ENCODE measurements at regions of chr7 and their contacts with region 1.

Region 1: DNA sequence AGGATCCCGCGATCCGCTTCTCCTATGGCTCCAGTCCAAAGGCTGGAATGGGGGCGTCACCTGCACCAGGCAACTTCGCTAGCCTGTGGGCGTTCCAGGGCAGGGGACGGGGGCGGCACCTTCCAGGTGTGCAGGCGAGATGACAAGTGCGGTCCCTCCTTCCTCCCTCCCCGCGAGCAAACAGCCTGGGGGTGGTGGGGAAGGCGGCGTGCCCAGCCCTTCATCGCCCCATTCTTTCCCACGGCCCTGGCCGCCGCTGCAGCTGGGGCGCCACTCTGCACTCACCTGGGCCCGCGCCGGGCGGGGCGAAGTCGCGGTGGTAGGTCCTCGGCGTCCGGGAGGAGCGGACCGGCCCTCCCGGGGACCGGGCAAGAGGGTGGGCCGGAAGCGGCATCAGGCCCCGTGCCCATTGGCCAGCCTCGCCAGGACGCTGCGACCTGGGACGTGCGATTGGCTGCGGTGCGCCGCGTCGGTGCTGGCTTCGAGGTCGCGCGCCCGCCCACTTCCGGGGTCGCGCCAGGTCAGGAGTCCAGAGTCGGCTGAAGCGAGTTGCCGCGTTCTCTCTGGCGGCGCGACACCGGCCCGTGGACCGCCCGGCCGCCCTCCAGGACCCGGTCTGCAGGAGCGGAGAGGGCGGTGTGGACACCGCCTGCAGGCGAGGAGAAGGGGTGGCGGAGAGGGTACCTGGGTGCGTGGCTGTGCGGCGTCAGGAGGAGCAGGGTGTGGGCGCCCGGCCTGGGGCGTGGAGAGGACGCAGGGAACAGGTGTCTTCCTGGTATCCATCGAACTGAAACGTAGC is at the start of gene TECPR1:
- DNase-seq: peak; percentile 90
- H3K4me3 Mint-ChIP-seq: peak within 1 kb of the TSS; percentile 98
- H3K27ac Mint-ChIP-seq: peak within 1 kb of the TSS; percentile 96
- H3K4me1 Mint-ChIP-seq: peaks cover 45% of the 10 kb centered on the region
- H3K27me3 Mint-ChIP-seq: no peaks in the 10 kb centered on the region
- total RNA-seq, gene TECPR1: 45.4 and 45.8 TPM in 2 replicates

Region 2: GRCh38 chr7:97971990-97972943 is 279.8 kb before region 1 on chr7:
- intact Hi-C with region 1: loop called (anchors 5 kb)
- DNase-seq: peak; percentile 80
- H3K4me3 Mint-ChIP-seq: peak overlapping the region; percentile 97
- H3K27ac Mint-ChIP-seq: peak overlapping the region; percentile 92
- H3K4me1 Mint-ChIP-seq: peaks cover 10% of the 10 kb centered on the region
- H3K27me3 Mint-ChIP-seq: no peaks in the 10 kb centered on the region

Region 3: DNA sequence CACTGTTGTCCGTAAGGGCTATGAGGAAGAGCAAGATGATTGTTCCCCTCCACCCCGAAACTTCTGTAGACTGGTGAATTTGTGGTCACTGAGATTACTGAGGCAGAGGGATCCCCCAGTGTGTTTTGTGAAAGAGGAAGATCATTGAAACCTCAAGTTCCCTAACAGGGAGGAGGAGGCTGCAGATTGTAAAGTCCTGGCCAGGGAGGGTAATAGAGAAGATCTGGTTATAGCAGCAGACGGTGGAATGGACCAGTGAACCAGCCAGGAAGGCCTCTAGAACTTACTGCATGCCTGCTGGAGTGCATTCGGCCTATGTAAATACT is 114.3 kb before region 1 on chr7:
- intact Hi-C with region 1: no loop called
- DNase-seq: no peak
- H3K4me3 Mint-ChIP-seq: no peak overlapping the region
- H3K27ac Mint-ChIP-seq: no peak overlapping the region
- H3K4me1 Mint-ChIP-seq: peaks cover 13% of the 10 kb centered on the region
- H3K27me3 Mint-ChIP-seq: peaks cover 8% of the 10 kb centered on the region

Region 4: GRCh38 chr7:98202367-98203195 is 49.5 kb before region 1 on chr7:
- intact Hi-C with region 1: loop called (anchors 1 kb)
- DNase-seq: peak; percentile 71
- H3K4me3 Mint-ChIP-seq: peak overlapping the region; percentile 6
- H3K27ac Mint-ChIP-seq: peak overlapping the region; percentile 75
- H3K4me1 Mint-ChIP-seq: peaks cover 32% of the 10 kb centered on the region
- H3K27me3 Mint-ChIP-seq: no peaks in the 10 kb centered on the region

Region 5: DNA sequence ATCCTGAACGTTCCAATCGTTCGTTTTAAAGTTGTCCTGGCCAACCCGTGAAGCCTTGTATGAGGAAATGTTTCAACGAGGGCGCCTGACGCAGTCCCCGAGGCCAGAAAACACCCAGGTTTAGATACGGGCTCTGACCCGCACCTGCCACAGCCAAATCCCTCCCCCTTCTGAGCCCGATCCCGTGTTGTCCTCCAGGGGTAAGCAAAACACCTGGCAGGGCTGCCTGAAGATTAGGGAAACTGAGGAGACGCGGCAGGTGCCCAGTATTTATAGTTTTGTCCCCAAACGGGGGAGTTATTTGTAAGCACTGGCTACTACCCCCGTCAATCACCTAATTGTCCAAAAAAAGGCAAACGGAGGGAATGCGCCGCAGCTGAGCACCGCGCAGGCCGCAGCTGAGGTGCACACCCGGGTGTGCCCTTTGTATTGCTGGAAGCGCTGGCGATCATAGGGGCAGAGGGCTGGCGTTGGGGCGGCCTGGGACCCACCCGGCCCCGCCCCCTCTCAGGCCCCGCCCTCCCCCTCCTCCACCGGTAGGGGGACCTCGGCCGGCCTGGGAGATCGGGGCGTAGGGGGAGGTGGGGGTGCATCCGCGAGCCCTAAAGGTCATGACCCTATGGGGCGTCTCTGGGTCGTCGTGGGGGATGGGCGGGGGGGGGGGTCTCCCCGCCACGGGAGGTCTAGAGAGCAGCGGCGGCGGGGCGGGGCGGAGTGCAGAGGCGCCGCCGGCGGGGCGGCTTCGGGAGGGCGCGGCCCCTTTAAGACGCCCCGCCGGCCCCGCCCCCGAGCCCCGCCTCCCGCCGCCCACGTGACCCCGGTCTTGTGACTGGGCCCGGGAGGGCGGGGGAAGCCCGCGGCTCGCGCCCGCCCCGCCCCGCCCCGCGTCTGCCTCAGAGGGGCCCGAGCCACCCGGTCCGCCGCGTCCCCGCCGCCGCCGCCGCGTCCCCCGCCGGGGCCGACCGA is 29.0 kb after region 1 on chr7 and contains the start of gene BRI3:
- intact Hi-C with region 1: loop called (anchors 1 kb)
- DNase-seq: peak; percentile 76
- H3K4me3 Mint-ChIP-seq: peak within 1 kb of the TSS; percentile 86
- H3K27ac Mint-ChIP-seq: peak within 1 kb of the TSS; percentile 80
- H3K4me1 Mint-ChIP-seq: peaks cover 13% of the 10 kb centered on the region
- H3K27me3 Mint-ChIP-seq: no peaks in the 10 kb centered on the region
- total RNA-seq, gene BRI3: 63.6 and 67.6 TPM in 2 replicates